WTC11 (cell line): ENCODE measurements at regions of chr12 and their contacts with region 1.

Region 1: DNA sequence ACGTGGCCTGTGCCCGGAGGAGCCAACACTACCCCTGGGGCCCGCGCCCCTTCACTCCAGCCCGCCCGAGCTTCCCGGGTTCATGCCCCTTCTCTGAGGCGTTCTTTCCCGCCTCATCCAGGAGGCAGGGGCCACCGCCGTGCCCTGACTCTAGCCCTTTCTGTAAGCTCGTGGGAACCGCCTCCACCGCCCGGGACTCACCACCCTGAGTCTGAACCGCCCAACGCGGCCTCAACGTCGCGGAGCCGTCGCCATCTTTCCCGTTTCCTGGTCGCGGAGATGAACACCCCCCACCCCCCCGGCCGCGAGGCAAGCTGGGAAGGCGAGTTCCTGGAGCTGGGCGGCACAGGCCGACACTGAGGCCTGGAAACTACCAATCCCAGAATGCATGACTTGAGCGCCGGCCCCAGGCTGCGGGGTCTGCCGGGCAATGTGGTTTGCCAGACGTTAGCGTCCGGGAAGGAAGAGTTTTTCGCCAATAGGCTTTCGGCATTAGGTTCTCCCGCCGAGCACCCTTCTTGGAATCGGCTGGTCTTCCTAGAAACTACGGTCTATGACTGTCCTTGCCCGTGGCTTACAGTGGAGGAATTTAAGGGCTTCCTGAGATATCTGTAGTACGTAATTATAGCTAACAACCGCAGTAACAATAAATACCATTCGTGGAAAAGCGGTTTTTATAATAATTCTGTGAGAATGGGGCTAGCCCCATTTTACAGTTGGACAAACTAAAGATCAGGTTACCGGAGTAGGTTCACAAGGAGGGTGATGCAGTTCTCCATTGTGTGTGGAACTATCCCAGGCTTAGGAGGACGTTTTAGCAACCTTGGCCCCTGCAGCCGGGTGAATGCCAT is at the start of gene DDX23:
- DNase-seq: peak; percentile 93
- ATAC-seq: peak; percentile 99
- H3K4me3 Mint-ChIP-seq: peak within 1 kb of the TSS; percentile 94
- H3K27ac Mint-ChIP-seq: peak within 1 kb of the TSS; percentile 95
- H3K4me1 Mint-ChIP-seq: peaks cover 20% of the 10 kb centered on the region
- H3K27me3 Mint-ChIP-seq: no peaks in the 10 kb centered on the region
- CTCF ChIP-seq: no peak
- total RNA-seq, gene DDX23: 91.1 to 107 TPM (median 93.4 TPM) in 3 replicates

Region 2: GRCh38 chr12:48696626-48697025 is 155.5 kb before region 1 on chr12:
- CTCF ChIA-PET with region 1: no interaction called
- POLR2A ChIA-PET with region 1: no interaction called
- DNase-seq: no peak
- ATAC-seq: no peak
- H3K4me3 Mint-ChIP-seq: no peak overlapping the region
- H3K27ac Mint-ChIP-seq: no peak overlapping the region; the same call in 1 of the 2 replicates
- H3K4me1 Mint-ChIP-seq: no peaks in the 10 kb centered on the region
- H3K27me3 Mint-ChIP-seq: no peaks in the 10 kb centered on the region
- CTCF ChIP-seq: no peak

Region 3: DNA sequence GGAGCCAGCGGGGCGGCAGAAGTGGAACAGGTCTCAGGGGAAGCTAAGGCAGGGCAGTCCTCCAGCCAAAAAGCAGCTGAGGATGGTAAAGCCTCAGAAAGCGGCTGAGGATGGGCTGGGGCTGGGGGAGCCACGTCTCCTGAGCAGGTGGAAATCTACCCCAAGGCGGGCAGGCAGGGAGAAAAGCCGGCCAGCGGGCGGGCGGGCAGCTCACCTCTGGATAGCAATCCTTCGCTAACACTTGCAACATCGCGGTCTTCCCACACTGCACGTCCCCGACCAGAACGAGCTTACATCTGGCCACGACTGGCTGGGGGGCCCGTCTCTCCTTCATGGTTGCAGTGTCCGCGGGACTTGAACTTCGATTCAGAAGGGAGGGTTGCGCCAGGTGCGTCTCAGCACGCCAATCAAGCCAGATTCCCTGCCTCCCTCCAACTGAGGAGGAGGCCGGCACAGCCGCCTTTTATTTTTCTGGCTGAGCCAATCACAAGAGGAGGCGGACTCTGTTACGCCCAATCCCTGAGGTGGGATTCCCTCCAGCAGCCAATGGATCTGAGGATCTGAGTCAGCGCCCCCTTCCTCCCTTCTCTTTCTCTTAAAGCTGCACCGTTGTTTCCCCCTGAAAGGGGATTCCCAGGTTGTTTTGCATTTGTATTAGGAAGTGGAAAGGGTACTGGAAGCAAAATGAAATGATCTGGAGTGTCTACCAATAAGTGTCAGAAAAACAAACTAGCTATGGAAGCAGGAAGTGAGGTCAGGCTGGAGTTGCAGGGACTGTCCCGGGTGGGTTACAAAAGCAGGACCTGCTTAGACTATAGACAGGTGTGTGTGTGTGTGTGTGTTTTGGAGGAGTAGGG is 13.6 kb after region 1 on chr12 and contains the start of gene RND1:
- CTCF ChIA-PET with region 1: interaction called, 134 read pairs
- POLR2A ChIA-PET with region 1: interaction called, 24 read pairs
- DNase-seq: peak; percentile 92
- ATAC-seq: peak; percentile 96
- H3K4me3 Mint-ChIP-seq: peak within 1 kb of the TSS; percentile 91
- H3K27ac Mint-ChIP-seq: peak within 1 kb of the TSS; percentile 94
- H3K4me1 Mint-ChIP-seq: peaks cover 44% of the 10 kb centered on the region
- H3K27me3 Mint-ChIP-seq: peaks cover 6% of the 10 kb centered on the region; the same call in 1 of the 2 replicates
- CTCF ChIP-seq: no peak
- total RNA-seq, gene RND1: 7.6 to 9.1 TPM (median 8.5 TPM) in 3 replicates

Region 4: DNA sequence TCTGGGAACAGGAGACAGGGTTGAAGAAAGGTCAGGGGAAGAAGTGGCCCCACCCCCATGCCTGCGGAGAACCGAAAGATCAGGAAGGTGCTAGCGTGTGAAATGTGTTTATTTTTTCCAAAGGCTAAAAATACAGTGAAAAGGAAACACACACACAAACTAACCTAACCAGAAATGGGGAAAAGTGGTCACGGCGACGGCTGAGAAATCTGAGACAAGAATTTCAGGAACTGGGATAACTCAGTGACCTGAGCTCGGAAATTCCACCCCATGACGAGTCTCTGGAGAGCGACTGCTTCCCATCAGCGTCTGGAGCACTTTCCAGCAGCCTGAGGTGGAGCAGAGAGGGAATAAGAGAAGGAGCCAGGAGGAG is 30.2 kb after region 1 on chr12:
- CTCF ChIA-PET with region 1: interaction called, 352 read pairs
- POLR2A ChIA-PET with region 1: interaction called, 11 read pairs
- DNase-seq: peak; percentile 26
- ATAC-seq: peak; percentile 50
- H3K4me3 Mint-ChIP-seq: peak overlapping the region; percentile 50
- H3K27ac Mint-ChIP-seq: peak overlapping the region; percentile 56
- H3K4me1 Mint-ChIP-seq: peaks cover 33% of the 10 kb centered on the region
- H3K27me3 Mint-ChIP-seq: peaks cover 7% of the 10 kb centered on the region
- CTCF ChIP-seq: no peak

Region 5: GRCh38 chr12:48903982-48904411 is 51.9 kb after region 1 on chr12:
- CTCF ChIA-PET with region 1: interaction called, 43 read pairs
- POLR2A ChIA-PET with region 1: interaction called, 9 read pairs
- DNase-seq: peak; percentile 92
- ATAC-seq: peak; percentile 100
- H3K4me3 Mint-ChIP-seq: peak overlapping the region; percentile 65
- H3K27ac Mint-ChIP-seq: no peak overlapping the region
- H3K4me1 Mint-ChIP-seq: 0 out of 2 replicates have a peak, but pooled peaks cover 3% of the 10 kb centered on the region
- H3K27me3 Mint-ChIP-seq: peaks cover 14% of the 10 kb centered on the region
- CTCF ChIP-seq: peak; percentile 45; the same call in 1 of the 2 replicates

Region 6: DNA sequence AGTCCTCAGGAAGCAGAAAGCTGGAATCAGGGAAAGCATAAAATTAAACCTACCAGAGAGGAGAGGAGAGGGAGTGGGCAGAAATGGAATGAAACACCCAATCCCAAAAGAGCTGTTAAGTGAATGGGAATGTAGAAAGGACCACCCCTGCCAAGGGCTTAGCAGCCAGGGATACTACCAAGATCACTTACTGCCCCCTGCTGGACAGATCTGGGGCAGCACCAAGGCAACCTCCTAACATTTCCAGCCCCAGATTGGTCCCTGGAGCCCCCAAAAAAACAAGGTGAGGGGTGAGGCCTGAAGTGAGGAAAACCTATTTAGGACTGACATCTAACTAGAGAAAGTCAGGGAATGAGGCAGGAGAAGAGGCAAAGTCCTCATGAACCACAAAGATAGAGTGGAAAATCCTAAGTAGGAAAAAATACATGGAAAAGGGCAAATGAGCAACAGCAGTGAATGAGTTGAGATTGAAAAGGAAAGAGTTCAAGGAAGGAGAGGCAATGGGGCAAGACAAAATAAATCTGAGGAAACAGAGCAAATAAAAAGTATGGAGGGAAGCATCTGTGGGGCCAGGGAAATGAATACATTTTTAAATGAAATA is 84.4 kb after region 1 on chr12:
- CTCF ChIA-PET with region 1: interaction called, 50 read pairs
- POLR2A ChIA-PET with region 1: no interaction called
- DNase-seq: peak; percentile 89
- ATAC-seq: peak; percentile 88
- H3K4me3 Mint-ChIP-seq: no peak overlapping the region
- H3K27ac Mint-ChIP-seq: peak overlapping the region; percentile 46
- H3K4me1 Mint-ChIP-seq: no peaks in the 10 kb centered on the region
- H3K27me3 Mint-ChIP-seq: no peaks in the 10 kb centered on the region
- CTCF ChIP-seq: peak; percentile 70

Region 7: GRCh38 chr12:48969833-48970701 is 118.0 kb after region 1 on chr12:
- CTCF ChIA-PET with region 1: interaction called, 14 read pairs
- POLR2A ChIA-PET with region 1: no interaction called
- DNase-seq: peak; percentile 48
- ATAC-seq: peak; percentile 3; the same call in 1 of the 2 replicates
- H3K4me3 Mint-ChIP-seq: peak overlapping the region; percentile 86
- H3K27ac Mint-ChIP-seq: no peak overlapping the region
- H3K4me1 Mint-ChIP-seq: peaks cover 54% of the 10 kb centered on the region
- H3K27me3 Mint-ChIP-seq: peaks cover 89% of the 10 kb centered on the region
- CTCF ChIP-seq: no peak